ENCODE measurements at regions of chr17 and their contacts with region 1.

Region 1: DNA sequence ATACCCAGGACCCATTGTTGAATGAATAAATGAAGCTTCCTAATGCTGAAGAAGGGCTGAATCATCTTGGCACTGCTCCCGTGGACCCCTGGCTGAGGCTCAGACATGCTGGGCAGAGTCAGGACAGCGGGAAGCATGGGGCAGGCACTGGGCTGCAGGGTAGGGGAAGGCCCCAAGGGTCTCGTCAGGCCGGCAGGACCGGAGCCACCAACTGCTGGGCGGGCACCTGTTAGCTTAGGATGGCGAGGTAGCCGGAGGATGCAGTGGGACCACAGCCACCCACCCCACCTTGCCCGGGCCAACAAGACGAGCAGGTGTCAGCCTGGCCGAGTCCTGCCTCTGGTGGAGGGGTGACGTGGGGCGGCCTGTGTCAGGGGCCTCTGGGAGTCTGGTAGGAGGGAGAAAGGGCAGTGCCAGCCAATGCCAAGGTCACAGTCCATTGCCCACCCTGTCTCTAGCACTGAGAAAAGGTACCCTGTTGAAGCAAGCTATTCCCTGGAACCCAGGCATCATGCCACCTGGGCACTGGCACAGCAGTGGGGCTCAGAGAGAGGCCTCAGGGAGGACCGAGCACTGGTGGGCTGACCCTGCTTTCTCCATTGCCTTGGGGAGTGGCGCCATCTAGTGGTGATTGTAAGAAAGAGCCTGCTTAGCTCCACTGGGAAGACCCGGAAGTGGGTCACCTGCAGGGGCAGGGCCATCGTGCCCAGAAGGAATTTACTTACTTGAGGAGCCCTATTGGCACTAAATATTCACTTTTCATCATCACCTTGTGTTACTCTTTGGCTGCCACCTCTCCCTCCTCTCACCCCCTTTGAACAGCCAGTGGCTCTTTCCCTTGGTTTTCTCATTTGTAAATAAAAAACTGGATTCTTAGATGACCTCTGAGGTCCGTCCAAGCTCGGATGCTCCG is 3.0 kb upstream of the DLX3 start:
- DNase-seq: peak; percentile 63 to 68
- H3K4me3 ChIP-seq: no peak overlapping the region
- H3K27ac ChIP-seq: no peak overlapping the region
- H3K4me1 ChIP-seq: peaks cover 5 to 20% of the 10 kb centered on the region in 2 donors
- H3K27me3 ChIP-seq: peaks cover 28 to 58% of the 10 kb centered on the region in 2 donors
- CTCF ChIP-seq: peak; percentile 80 to 94 (median 88)
- POLR2A ChIP-seq: no peak

Region 2: DNA sequence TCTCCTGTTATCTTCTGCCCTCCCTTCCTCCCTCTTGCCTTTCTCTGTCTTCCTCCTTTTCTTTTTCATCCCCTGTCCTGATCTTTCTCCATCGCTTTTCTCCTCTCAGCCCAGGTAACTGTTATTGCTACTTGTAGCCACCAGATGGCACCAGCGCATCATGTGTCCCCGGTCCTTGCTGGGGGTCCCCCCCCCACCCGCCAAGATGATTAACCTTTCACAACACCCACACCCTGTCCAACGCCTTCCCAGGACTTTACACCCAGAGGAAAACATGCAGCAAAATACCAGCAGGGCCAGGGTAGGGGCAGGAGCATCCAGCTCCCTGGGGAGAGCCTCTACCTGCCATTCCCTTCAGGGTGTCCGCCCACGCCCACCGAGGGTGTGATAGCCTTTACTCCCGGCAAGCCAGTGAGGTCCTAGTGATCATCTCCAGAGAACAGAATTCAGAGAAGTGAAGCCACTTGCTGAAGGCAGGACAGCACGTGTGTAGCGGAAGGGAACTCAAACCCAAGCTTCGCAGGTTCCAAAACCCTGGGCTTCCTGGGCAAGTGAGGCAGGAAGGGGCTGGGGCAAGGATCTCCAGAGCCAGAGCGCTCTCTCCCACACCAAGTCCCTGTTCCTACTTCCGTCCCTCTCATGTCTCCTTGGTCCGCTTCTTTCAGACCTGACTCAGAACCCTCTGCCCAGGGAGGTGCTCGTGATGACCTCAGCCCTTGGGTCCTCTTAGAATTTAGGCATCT is 136.7 kb before region 1 on chr17:
- intact Hi-C with region 1: loop called (anchors 5 kb)
- DNase-seq: peak in 1 of 2 donors; percentile 40
- H3K4me3 ChIP-seq: no peak overlapping the region
- H3K27ac ChIP-seq: no peak overlapping the region
- H3K4me1 ChIP-seq: no peaks in the 10 kb centered on the region
- H3K27me3 ChIP-seq: no peaks in the 10 kb centered on the region
- CTCF ChIP-seq: peak; percentile 62 to 81 (median 76)
- POLR2A ChIP-seq: no peak

Region 3: DNA sequence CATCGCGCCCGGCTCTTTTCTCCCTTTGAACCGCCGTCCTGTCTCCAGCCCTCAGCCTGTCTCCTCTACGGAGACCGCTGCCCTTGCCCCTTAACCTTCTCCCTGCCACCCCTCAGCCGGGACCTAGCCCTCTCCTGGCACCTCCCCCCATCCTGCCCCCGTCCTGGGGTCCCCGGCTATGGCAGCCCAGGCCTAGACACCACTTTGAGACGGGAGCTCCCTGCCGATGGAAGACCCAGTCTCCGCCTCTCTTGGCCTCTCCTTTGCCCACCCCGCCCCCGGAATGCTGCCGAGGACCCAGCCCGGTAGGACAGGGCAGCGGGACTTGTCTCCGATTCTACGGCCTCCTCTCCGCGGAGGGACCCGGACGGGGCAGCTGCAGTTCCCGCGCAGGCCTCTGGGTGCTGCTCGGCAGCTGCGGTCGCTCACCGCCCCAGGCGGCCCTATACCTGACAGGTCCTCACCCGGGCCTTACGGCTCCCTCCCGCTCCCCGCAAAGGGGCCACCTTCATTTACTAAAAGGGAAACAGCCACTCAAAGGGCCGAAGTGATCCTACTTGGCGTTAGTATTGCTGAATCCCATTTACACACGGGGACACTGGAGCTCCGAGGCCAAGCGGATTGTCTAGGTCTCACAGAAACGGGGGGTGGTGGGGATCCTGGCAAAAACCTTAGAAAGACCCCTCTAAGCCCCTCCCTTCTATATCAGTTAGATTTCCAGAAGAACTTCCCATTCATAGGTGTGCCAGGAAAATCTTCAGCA is 117.6 kb before region 1 on chr17:
- intact Hi-C with region 1: loop called (anchors 5 kb)
- DNase-seq: peak; percentile 38 to 73
- H3K4me3 ChIP-seq: no peak overlapping the region
- H3K27ac ChIP-seq: no peak overlapping the region
- H3K4me1 ChIP-seq: no peaks in the 10 kb centered on the region
- H3K27me3 ChIP-seq: peaks cover 4 to 9% of the 10 kb centered on the region in 2 donors
- CTCF ChIP-seq: peak; percentile 79 to 99 (median 90)
- POLR2A ChIP-seq: no peak

Measured in uterus (tissue), 4 donors.